H1 (cell line): ENCODE measurements at regions of chr16 and their contacts with region 1.

Region 1: DNA sequence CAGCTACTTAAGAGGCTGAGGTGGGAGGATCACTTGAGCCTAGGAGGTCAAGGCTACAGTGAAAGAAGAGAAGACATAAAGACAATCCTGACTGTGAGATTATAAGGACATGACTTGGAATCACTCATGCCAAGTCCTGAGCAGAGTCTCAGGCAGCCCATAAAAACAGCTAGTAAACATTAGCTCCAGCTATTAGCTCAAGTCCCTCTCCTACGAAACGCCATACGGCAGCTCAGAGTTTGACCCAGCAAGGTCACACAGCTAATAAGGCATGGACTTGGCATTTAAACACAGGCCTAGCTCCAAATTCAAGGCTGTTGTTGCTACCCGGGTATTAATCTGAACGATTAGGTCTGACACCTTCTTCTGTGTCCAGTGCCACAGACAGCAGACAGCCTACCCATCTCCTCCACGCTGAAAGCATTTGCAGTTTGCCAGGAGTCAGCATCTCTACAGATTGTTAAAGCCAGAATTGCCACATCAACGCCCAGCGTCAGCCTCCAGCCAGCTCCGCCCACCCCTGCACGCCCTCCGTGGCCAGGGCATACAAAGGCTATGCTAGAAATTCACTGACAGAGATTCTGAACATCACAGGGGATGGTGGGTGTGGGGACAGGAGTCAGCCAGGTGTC is 9.9 kb upstream of the TMEM114 start:
- DNase-seq: no peak
- H3K4me3 ChIP-seq: no peak overlapping the region
- H3K27ac ChIP-seq: no peak overlapping the region
- H3K4me1 ChIP-seq: peaks cover 0 to 3% (median 0%) of the 10 kb centered on the region in 4 experiments; a peak in 2 of 7 replicates
- H3K27me3 ChIP-seq: no peaks in the 10 kb centered on the region
- CTCF ChIP-seq: no peak
- EP300 ChIP-seq: no peak
- POLR2A ChIP-seq: no peak
- RAD21 ChIP-seq: no peak

Region 2: DNA sequence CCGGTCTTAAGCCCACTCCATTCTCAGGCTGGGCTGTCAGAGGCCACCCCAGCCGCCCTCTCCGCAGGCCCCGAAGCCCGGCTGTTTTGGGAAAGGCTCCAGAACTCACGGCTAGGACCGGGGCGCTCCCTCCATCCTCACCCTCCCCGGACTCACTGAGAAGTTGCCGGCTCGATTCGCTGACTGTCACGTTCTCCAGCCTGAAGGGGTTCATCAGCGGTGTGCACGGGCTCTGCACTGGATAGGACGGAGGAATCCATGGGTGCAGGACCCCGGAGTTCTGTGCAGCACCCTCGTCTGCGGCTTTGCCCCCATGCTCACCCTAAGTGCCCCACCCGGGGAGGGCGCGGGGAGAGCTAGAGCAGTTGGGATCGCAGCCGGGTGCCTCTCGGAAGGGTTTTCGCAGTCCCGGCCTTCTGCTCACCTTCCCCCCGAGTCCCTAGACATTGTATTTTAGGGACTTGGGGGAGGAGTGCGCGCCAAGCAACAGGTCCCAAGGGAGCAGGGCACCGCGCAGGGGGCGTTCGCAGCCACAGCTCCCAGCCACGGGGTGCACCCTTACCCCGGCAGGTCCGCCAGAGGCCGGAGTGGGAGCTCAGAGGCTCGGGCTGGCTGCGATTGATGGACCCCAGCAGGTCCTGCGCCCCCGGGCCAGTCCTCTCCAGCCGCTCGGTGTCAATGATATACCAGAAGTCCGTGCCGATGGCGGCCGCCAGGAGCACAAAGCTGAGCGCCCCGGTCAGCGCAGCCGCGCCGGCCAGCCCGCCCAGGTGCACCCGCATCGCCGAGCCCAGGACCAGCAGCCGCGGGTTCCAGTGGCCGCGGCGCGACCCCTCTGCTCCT is 11.0 kb before region 1 on chr16:
- CTCF ChIA-PET with region 1: interaction called, 8 read pairs
- POLR2A ChIA-PET with region 1: interaction called, 10 read pairs
- DNase-seq: peak in 1 of 2 experiments; percentile 78
- H3K4me3 ChIP-seq: peak overlapping the region; percentile 52 to 69 (median 60)
- H3K27ac ChIP-seq: no peak overlapping the region
- H3K4me1 ChIP-seq: peaks cover 0 to 12% (median 5%) of the 10 kb centered on the region in 4 experiments; a peak in 3 of 7 replicates
- H3K27me3 ChIP-seq: peaks cover 10 to 33% (median 21%) of the 10 kb centered on the region in 4 experiments
- CTCF ChIP-seq: peak in 2 of 3 experiments; percentile 8 to 12; a peak in 2 of 4 replicates
- EP300 ChIP-seq: no peak
- POLR2A ChIP-seq: no peak
- RAD21 ChIP-seq: no peak

Region 3: DNA sequence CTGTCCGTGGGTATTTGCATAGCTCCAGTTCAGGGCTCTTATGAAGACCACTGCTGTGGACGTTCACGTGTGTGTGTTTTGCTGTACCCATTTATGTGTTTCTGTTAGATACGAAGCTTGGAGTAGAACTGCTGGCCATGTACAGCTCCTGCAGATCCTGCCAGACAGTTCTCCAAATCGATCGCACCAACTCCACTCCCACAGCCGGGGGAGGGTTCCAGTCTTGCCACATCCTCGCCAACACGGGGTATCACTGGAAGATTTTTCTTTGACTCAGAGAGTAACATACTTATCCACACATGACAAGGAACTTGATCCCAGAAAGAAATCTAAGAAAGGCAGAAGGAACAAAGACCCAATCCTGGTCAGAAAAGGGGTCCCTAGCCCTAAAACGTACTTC is 159.8 kb after region 1 on chr16:
- CTCF ChIA-PET with region 1: no interaction called
- POLR2A ChIA-PET with region 1: no interaction called
- DNase-seq: no peak
- H3K4me3 ChIP-seq: no peak overlapping the region
- H3K27ac ChIP-seq: no peak overlapping the region
- H3K4me1 ChIP-seq: peaks cover 0 to 11% (median 5%) of the 10 kb centered on the region in 4 experiments; a peak in 4 of 7 replicates
- H3K27me3 ChIP-seq: no peaks in the 10 kb centered on the region
- CTCF ChIP-seq: no peak
- EP300 ChIP-seq: no peak
- POLR2A ChIP-seq: no peak
- RAD21 ChIP-seq: no peak